ENCODE measurements at regions of chr17 and their contacts with region 1.

Region 1: DNA sequence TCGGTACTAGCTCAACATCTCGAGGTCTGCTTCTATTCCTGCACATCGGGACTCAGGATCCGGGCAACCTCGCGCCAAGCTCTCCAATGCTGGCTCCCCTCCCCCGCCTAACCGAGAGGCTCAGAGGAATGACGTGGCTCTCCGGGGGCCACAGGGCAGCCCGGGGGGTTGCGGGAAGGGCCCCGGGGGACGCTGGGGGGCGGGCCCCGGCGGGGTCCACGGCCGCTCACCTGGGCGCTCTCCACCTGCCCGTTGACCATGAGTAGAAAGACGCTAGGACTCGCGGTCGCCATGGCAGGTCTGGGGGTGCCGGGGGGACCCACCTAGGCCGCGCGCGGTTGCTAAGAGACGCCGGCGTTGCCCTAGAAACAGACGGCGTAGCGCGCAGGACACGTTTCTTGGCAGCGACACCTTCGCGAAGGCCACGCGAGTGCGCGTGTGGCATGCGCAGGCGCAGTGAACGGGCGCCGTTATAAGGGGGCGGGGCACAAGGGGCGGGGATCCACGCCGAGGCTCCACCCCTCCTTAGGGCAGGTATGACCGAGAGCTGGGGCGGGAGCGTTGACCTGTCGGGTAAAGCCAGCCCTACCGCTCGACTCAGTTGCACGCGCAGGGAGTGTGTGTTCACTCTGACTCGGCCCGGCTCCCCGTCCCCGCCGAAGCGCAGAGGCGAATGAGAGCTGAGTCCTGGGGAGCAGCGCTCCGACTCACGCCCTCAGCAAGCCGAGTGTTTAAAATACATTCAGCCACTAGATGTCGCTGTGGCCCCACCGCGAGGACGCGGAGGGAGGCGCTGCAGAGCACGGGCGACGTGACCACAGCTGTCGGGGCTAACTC is at the start of gene B9D1:
- DNase-seq: peak; percentile 97
- H3K4me3 ChIP-seq: peak within 1 kb of the TSS; percentile 65 to 83 (median 78)
- H3K27ac ChIP-seq: peak within 1 kb of the TSS; percentile 85 to 91 (median 88)
- H3K4me1 ChIP-seq: peaks cover 0 to 20% (median 17%) of the 10 kb centered on the region in 4 donors
- H3K27me3 ChIP-seq: no peaks in the 10 kb centered on the region
- CTCF ChIP-seq: peak; percentile 97 to 100 (median 98)
- EP300 ChIP-seq: peak in 2 of 4 donors; percentile 6 to 26
- POLR2A ChIP-seq: no peak
- total RNA-seq, gene B9D1: 15.2 to 22.4 (median 16.0) TPM

Region 2: DNA sequence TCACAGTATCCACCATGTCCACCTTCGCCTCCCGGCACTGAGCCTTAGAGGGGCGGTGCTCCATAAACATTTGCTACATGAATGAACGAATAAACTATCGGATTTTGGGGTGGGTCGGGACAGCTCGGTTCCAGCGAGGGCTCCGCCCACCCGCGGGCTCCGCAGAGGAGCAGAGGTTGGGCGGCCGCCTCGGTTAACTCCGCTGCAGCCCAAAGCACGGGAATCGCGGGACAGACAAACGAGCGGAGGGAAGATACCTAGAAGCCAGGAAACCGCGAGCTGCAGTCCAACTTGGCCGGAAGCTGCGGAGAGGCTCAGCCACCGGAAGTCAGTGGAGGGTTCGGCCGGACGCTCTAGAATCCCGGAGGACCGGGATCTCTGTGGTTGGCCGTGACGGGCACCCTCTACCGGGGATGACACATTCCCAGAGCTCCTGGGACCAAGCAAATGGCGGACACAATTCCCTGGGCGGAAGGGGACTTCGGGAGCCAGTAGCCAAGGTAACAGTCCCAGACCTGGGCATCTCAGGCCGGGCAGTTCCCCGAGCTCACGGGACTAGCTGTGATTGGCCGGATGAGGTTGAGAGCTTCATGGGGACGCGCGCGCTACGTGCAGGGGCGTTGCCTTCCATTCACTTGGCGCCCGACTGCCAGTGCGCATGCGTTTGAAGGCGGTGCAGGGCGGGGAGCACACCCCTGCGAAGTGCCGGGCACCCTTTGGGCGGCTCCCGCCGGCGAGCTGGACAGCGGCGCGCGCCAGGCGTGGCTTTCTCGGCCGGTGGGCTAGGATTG is 15.3 kb after region 1 on chr17:
- intact Hi-C with region 1: loop called (anchors 1 kb)
- DNase-seq: peak; percentile 99
- H3K4me3 ChIP-seq: peak overlapping the region; percentile 63 to 93 (median 76)
- H3K27ac ChIP-seq: peak overlapping the region; percentile 90 to 97 (median 96)
- H3K4me1 ChIP-seq: peaks cover 0 to 47% (median 34%) of the 10 kb centered on the region in 4 donors
- H3K27me3 ChIP-seq: no peaks in the 10 kb centered on the region
- CTCF ChIP-seq: no peak
- EP300 ChIP-seq: no peak
- POLR2A ChIP-seq: peak; percentile 60 to 63

Region 3: DNA sequence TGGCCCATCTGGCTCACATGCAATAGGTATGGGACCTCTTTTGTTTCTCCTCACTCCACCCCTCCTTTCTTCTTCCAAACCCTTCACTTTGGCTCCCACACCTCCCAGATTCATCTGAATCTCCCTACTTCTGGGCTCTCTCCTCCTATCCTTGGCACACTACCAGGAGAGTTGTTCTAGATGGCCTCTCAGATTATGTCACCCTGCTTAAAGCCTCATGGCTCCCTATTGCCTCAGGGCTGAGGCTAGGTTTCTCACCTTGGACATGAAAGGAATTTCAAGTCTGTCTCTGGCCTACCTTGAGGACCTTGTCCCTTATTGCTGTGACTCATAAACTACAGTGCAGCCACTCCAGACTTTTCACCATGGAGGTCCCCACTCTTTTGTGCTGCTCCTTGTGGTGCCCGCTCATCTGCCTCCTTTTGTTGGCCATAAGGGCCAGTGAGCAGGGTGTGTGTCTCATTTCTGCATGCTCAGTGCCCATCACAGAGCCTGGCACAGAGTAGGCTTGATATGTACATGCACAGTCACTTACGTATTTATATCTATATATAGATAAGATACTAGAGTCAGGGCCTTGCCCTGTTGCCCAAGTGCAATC is 25.5 kb after region 1 on chr17:
- intact Hi-C with region 1: no loop called
- DNase-seq: peak; percentile 87
- H3K4me3 ChIP-seq: peak overlapping the region in 1 of 4 donors; percentile 51
- H3K27ac ChIP-seq: peak overlapping the region; percentile 95 to 97 (median 96)
- H3K4me1 ChIP-seq: peaks cover 0 to 99% (median 92%) of the 10 kb centered on the region in 4 donors
- H3K27me3 ChIP-seq: no peaks in the 10 kb centered on the region
- CTCF ChIP-seq: no peak
- EP300 ChIP-seq: no peak
- POLR2A ChIP-seq: no peak

Region 4: GRCh38 chr17:19410875-19411620 is 48.6 kb after region 1 on chr17 and contains the start of gene RNF112:
- intact Hi-C with region 1: loop called (anchors 5 kb)
- DNase-seq: no peak
- H3K4me3 ChIP-seq: peak within 1 kb of the TSS; percentile 14 to 52 (median 38)
- H3K27ac ChIP-seq: peak within 1 kb of the TSS in 3 of 4 donors; percentile 41 to 75 (median 65)
- H3K4me1 ChIP-seq: peaks cover 0 to 29% (median 21%) of the 10 kb centered on the region in 4 donors
- H3K27me3 ChIP-seq: no peaks in the 10 kb centered on the region
- CTCF ChIP-seq: peak in 3 of 4 experiments; percentile 28 to 39 (median 36)
- EP300 ChIP-seq: no peak
- POLR2A ChIP-seq: no peak
- total RNA-seq, gene RNF112: 3.8 to 8.6 (median 7.8) TPM

Region 5: DNA sequence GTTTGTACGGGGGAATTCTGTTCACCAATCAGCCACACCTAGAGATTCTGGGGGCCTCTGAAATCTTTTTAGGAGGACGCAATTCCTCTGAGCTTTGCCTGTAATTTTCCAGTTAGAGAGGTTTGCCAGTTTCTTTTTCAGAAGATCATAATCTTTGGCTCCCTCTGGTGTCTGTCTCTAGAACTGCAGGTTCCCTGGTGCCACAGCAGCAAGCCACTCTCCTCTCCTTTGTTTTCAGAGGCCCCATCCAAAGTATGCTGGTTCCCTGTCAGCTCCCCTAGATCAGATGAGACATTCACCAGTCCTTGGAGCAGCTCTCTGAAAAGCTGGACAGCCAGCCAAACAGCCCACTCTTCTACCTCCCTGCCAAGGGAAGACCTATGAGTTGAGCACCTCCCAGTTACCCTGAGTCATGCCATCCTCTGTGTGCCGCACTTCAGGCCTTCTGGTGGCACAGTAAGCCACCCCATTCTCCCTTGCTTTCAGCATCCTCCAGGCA is 84.6 kb after region 1 on chr17:
- intact Hi-C with region 1: loop called (anchors 1 kb)
- DNase-seq: peak; percentile 90
- H3K4me3 ChIP-seq: no peak overlapping the region
- H3K27ac ChIP-seq: peak overlapping the region; percentile 83 to 94 (median 88)
- H3K4me1 ChIP-seq: peaks cover 0 to 37% (median 35%) of the 10 kb centered on the region in 4 donors
- H3K27me3 ChIP-seq: no peaks in the 10 kb centered on the region
- CTCF ChIP-seq: peak; percentile 95 to 99 (median 96)
- EP300 ChIP-seq: peak in 1 of 4 donors; percentile 0
- POLR2A ChIP-seq: no peak

Region 6: GRCh38 chr17:19507775-19508576 is 145.5 kb after region 1 on chr17:
- intact Hi-C with region 1: loop called (anchors 2 kb)
- DNase-seq: peak; percentile 95
- H3K4me3 ChIP-seq: peak overlapping the region; percentile 64 to 83 (median 72)
- H3K27ac ChIP-seq: peak overlapping the region; percentile 97 to 98 (median 98)
- H3K4me1 ChIP-seq: peaks cover 0 to 13% (median 2%) of the 10 kb centered on the region in 4 donors
- H3K27me3 ChIP-seq: no peaks in the 10 kb centered on the region
- CTCF ChIP-seq: no peak
- EP300 ChIP-seq: no peak
- POLR2A ChIP-seq: peak; percentile 41 to 48

Region 7: DNA sequence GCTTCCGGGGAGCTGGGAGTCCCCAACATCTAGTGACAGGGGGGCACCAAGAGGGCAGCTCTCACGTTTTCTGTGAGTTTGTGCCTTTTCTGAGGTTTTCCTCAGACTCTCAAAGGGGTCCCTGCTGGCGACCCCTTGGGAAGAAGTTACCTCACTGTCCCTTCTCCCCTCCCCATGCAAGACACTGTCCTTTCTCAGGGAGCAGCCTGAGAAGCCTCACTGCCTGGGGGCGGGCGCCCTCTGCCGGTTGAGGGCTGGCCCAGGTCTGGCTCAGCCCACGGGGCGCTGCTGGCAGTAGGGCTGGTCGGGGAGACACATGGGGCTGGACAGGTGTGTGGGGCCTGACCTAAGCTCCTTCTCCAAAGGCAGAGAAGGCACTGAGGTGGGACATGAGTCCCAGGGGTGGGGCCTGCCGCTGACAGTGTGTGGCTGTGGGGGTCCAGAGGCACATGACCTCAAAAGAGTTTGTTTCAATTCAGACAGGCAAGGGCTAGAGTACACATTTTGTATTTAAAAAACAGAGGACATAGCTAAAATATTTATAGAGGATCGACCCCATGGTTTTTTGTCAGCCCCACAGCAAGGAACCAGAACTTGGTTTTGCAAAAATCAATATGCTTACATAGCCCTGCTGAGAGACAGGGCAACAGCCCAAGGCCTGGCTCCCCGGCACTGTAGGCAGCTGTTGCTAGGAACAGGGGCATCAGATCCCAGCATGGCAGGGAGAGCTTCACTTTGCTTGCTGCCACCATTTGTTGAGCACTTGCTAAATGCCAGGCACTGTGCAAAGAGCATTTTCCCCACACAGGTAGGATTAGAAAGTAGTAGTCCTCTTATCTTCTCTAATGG is 404.2 kb after region 1 on chr17:
- intact Hi-C with region 1: loop called (anchors 5 kb)
- DNase-seq: peak; percentile 88
- H3K4me3 ChIP-seq: no peak overlapping the region
- H3K27ac ChIP-seq: no peak overlapping the region
- H3K4me1 ChIP-seq: peaks cover 0 to 21% (median 14%) of the 10 kb centered on the region in 4 donors
- H3K27me3 ChIP-seq: no peaks in the 10 kb centered on the region
- CTCF ChIP-seq: peak; percentile 91 to 96 (median 94)
- EP300 ChIP-seq: no peak
- POLR2A ChIP-seq: no peak

Measured in sigmoid colon (tissue), 7 donors.